T-cell (primary cell): ENCODE measurements at regions of chr12 and their contacts with region 1.

Region 1: GRCh38 chr12:1533602-1534304 is 60.6 kb downstream of the FBXL14 start:
- DNase-seq: peak in 13 of 35 experiments; percentile 3 to 53 (median 22)
- ATAC-seq: peak; percentile 51 to 67 (median 56)
- H3K4me3 ChIP-seq: peak overlapping the region; percentile 33 to 64
- H3K4me3 Mint-ChIP-seq: peak overlapping the region; percentile 77 to 82 (median 78)
- H3K27ac ChIP-seq: no peak overlapping the region
- H3K27ac Mint-ChIP-seq: no peak overlapping the region
- H3K4me1 ChIP-seq: peaks cover 13 to 44% of the 10 kb centered on the region in 2 experiments
- H3K4me1 Mint-ChIP-seq: peaks cover 36 to 40% (median 39%) of the 10 kb centered on the region in 3 donors
- H3K27me3 ChIP-seq: peaks cover 20 to 83% of the 10 kb centered on the region in 2 experiments
- H3K27me3 Mint-ChIP-seq: peaks cover 57 to 66% of the 10 kb centered on the region in 2 donors

Region 2: DNA sequence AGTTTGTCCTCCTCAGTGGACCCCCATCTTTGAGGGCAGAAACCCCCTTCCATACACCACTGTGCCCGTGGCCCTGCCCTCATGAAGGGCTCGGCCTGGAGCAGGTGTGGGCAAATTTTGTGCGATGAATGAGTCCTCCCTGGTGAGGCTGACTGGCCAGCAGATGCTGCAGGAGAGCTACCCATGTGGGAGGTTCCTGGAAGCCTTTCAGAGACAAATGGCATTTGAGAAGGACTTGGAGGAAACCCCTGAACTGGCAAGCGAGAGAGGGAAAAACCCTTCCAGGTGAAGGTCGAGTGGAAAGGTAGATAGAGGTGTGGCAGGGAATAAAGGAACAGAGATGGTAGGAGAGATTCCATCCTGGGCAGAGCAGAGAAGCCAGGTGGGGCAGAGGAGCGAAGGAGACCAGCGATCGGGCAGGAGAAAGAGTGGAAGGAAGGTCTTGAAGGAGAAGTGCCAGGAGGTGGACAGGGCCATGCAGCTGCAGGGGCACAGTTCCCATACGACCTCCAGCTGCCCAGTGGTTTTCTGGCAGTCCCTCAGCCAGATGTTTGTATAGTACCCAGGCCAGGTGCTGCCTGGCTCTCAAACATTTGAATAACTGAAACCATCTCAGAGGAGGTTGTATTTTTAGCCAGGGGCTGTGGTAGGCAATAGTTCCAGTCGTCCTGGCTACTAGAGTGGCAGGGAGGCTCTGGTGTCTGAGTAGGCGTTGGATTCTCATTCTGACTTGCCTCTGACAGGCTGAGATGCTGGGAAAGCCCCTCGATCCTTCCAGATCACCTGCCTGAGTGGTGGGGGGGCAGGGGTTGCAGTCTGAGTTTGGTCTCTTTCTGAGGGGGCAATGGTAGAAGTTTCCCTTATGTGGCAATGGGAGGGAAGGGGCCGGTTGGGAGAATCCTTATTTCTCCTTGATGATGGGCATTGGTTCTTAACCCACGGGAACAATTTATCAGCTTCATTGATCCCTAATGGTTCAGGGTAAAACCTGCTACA is 20.5 kb after region 1 on chr12:
- CTCF ChIA-PET with region 1: no interaction called
- POLR2A ChIA-PET with region 1: interaction called in 1 of 2 experiments, 12 read pairs
- DNase-seq: no peak
- ATAC-seq: no peak
- H3K4me3 ChIP-seq: no peak overlapping the region
- H3K4me3 Mint-ChIP-seq: no peak overlapping the region
- H3K27ac ChIP-seq: no peak overlapping the region
- H3K27ac Mint-ChIP-seq: no peak overlapping the region
- H3K4me1 ChIP-seq: peaks cover 0 to 2% of the 10 kb centered on the region in 2 experiments
- H3K4me1 Mint-ChIP-seq: peaks cover 0 to 4% (median 0%) of the 10 kb centered on the region in 3 donors
- H3K27me3 ChIP-seq: peaks cover 0 to 11% of the 10 kb centered on the region in 2 experiments
- H3K27me3 Mint-ChIP-seq: peaks cover 0 to 9% of the 10 kb centered on the region in 2 donors

Region 3: GRCh38 chr12:1605129-1606020 is 71.6 kb after region 1 on chr12:
- CTCF ChIA-PET with region 1: no interaction called
- POLR2A ChIA-PET with region 1: interaction called in 1 of 2 experiments, 14 read pairs
- DNase-seq: peak in 34 of 35 experiments; percentile 27 to 86 (median 48)
- ATAC-seq: peak; percentile 65 to 79 (median 67)
- H3K4me3 ChIP-seq: peak overlapping the region; percentile 40 to 58
- H3K4me3 Mint-ChIP-seq: peak overlapping the region; percentile 76 to 85 (median 79)
- H3K27ac ChIP-seq: no peak overlapping the region
- H3K27ac Mint-ChIP-seq: peak overlapping the region; percentile 23 to 64
- H3K4me1 ChIP-seq: peaks cover 8 to 28% of the 10 kb centered on the region in 2 experiments
- H3K4me1 Mint-ChIP-seq: peaks cover 33 to 43% (median 41%) of the 10 kb centered on the region in 3 donors
- H3K27me3 ChIP-seq: peaks cover 0 to 7% of the 10 kb centered on the region in 2 experiments
- H3K27me3 Mint-ChIP-seq: peaks cover 0 to 3% of the 10 kb centered on the region in 2 donors